Activated T-helper 1 cell treated with anti-CD3 and anti-CD28 coated beads, Interleukin-12 subunit alpha, Interleukin-12 subunit beta, Interleukin-2, Interleukin-4 antibody, amounts not matched to agents 30 ng/mL and 10 ng/mL and 1 ng/mL, durations not matched to agents 14 hours and 24 hours and 36 hours (primary cell): ENCODE measurements at regions of chr20 and their contacts with region 1.

Region 1: GRCh38 chr20:47487175-47487917 is 14.3 kb upstream of the NCOA3 start:
- DNase-seq: peak; percentile 70
- H3K4me3 Mint-ChIP-seq: peak overlapping the region; percentile 68
- H3K27ac Mint-ChIP-seq: peak overlapping the region; percentile 98
- H3K4me1 Mint-ChIP-seq: peaks cover 54% of the 10 kb centered on the region
- H3K27me3 Mint-ChIP-seq: no peaks in the 10 kb centered on the region

Region 2: DNA sequence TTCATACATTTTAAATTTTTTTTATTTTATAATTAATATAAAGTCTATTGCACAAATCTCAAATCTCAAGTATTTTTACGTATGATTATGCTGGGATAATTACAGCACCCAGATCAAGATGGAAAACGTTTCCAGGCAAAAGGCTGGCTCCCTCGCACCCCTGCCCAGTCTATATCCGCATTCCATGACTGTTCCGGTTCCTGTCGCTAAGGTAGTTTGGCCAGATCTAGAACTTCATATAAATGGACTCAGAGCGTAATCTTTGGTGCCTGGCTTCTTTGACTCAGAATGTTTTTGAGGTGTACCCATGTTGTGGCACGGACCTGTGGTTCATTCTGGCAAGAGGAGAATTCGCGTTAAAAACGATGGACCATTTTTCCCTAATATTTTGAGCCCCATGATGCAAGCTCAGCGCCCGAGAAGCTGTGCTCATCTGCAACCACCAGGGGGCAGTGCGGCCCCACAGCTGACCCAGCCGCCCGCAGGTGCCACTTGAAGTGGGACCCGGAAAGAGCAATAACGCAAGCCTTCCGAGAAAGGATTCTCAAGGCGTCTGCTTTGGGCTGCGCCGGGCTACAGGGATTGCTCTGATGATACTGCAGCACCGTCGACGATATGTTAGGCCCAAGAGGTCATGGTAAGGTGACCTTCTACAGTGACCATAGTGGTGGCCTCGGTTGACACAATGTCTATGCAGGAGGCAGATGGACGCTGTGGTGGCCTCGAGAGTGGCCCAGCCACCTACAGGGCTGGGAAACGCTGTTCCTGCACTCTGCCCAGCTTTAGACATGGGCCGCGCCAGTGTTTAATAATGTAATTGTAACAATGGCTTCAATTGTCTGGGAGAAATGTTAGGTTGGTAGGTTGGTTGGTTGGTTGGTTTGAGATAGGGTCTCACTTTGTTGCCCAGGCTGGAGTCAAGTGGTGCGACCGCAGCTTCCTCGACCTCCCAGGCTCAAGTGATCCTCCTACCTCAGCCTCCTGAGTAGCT is 291.0 kb before region 1 on chr20:
- intact Hi-C with region 1: loop called (anchors 1 kb)
- DNase-seq: peak; percentile 67
- H3K4me3 Mint-ChIP-seq: no peak overlapping the region
- H3K27ac Mint-ChIP-seq: no peak overlapping the region
- H3K4me1 Mint-ChIP-seq: peaks cover 16% of the 10 kb centered on the region
- H3K27me3 Mint-ChIP-seq: peaks cover 3% of the 10 kb centered on the region

Region 3: DNA sequence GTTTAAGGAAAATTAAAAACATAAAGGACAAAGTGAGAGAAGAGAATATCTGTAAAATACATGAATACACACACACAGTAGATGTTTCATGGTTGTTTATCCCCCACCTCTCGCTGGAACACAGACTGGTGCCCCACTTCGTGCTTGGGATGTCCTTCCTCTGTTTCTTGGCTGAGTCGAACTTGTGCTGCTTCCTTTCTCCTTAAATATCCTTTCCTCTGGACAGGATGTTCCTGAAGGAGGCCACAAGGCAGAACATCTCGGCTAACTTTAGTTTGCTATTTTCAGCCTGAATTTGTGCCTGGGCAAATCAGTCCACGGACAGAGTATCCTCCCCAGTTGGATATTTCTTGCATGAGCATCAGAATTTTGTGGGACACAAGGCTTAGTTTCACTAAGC is 76.2 kb before region 1 on chr20:
- intact Hi-C with region 1: loop called (anchors 1 kb)
- DNase-seq: no peak
- H3K4me3 Mint-ChIP-seq: no peak overlapping the region
- H3K27ac Mint-ChIP-seq: no peak overlapping the region
- H3K4me1 Mint-ChIP-seq: peaks cover 33% of the 10 kb centered on the region
- H3K27me3 Mint-ChIP-seq: no peaks in the 10 kb centered on the region

Region 4: GRCh38 chr20:47468290-47469050 is 18.9 kb before region 1 on chr20:
- intact Hi-C with region 1: loop called (anchors 1 kb)
- DNase-seq: no peak
- H3K4me3 Mint-ChIP-seq: no peak overlapping the region
- H3K27ac Mint-ChIP-seq: no peak overlapping the region
- H3K4me1 Mint-ChIP-seq: peaks cover 13% of the 10 kb centered on the region
- H3K27me3 Mint-ChIP-seq: no peaks in the 10 kb centered on the region

Region 5: DNA sequence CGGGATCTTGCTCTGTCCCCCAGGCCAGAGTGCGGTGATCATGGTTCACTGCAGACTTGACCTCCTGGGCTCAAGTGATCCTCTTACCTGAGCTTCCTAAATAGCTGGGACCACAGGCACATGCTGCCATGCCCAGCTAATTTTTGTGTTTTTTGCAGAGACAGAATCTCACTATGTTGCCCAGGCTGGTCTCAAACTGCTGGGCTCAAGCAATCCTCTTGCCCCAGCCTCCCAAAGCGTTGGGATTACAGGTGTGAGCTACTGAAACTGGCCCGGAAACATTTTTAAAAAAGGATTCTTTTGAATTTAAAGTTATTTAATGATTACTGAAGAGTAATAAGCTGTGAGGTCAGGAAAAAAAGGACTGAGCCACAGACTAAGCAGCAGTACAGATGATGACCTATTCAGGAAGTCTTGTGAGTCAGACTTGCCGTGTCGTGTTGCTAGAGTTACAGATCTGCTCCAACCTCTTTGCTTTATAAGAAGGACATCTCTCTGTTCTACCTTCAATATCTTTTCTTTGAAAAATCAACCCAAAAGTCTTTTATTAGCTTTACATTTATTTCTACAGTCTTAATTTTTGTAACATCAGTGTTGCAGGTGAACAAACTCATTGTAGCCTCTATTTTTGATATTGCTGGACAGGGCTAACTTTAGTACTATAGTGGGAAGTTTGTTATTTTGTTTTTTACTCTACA is 123.0 kb after region 1 on chr20:
- intact Hi-C with region 1: loop called (anchors 1 kb)
- DNase-seq: peak; percentile 60
- H3K4me3 Mint-ChIP-seq: peak overlapping the region; percentile 77
- H3K27ac Mint-ChIP-seq: peak overlapping the region; percentile 97
- H3K4me1 Mint-ChIP-seq: peaks cover 84% of the 10 kb centered on the region
- H3K27me3 Mint-ChIP-seq: no peaks in the 10 kb centered on the region